Lower leg skin (tissue), 4 donors: ENCODE measurements at regions of chr3 and their contacts with region 1.

Region 1: GRCh38 chr3:192077795-192078497 is 617.0 kb downstream of the PYDC2 start:
- DNase-seq: no peak
- H3K4me3 ChIP-seq: no peak overlapping the region
- CTCF ChIP-seq: no peak
- POLR2A ChIP-seq: no peak

Region 2: DNA sequence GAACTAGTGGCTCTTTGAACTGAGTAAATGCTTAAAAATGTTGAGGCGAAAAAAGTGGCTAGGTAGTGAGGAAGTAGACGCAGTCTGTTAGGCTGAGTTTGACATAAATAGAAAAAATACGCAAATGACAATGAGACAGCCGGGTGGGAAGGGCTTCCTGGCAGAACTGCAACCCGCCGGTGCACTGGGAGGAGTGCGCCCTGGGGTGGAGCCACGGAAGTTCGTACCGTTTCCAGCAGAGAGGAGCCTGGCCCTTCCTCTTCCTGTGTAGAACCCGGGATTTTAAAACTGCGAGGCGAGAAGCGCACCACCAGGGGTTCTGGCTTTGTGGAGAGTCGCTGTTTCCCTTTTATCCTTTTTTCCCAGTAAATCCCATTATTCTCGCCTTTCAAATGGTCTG is 14.4 kb before region 1 on chr3:
- intact Hi-C with region 1: loop called (anchors 1 kb)
- DNase-seq: no peak
- H3K4me3 ChIP-seq: no peak overlapping the region
- CTCF ChIP-seq: no peak
- POLR2A ChIP-seq: no peak